GM12878 (cell line): ENCODE measurements at regions of chr11 and their contacts with region 1.

Region 1: DNA sequence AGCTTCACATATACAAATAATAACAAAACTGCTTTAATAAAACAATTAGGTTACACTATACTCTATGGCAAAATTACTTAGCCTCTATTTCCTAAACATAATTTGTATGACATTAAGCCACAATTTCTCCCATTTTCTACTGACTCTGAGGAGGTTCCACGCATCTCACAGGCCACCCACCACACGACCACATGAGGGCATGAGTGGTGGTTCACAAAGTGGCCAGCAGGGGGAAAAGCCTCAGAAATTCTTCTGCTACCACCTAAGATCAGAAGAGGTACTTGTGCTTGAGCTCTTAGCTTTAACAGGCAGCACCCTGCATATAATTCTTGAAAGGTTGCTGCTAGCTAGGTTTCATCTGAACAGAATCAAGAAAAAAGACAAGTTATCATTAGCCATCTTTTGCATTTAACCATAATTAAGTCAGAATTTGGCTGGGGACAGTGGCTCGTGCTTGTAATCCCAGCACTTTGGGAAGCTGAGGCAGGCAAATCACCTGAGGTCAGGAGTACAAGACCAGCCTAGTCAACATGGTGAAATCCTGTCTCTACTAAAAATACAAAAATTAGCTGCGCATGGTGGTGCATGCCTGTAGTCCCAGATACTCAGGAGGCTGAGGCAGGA is 7.7 kb downstream of the LPXN start:
- DNase-seq: no peak
- ATAC-seq: peak; percentile 89
- H3K4me3 ChIP-seq: 0 out of 2 replicates have a peak overlapping the region, but pooled peaks have one; percentile 16
- H3K27ac ChIP-seq: no peak overlapping the region
- H3K4me1 ChIP-seq: peaks cover 10% of the 10 kb centered on the region
- H3K27me3 ChIP-seq: no peaks in the 10 kb centered on the region
- CTCF ChIP-seq: peak; percentile 80 to 89 (median 85)
- EP300 ChIP-seq: no peak
- POLR2A ChIP-seq: no peak
- RAD21 ChIP-seq: peak; percentile 59

Region 2: GRCh38 chr11:57834852-57835251 is 733.1 kb before region 1 on chr11:
- CTCF ChIA-PET with region 1: no interaction called
- POLR2A ChIA-PET with region 1: no interaction called
- RAD21 ChIA-PET with region 1: no interaction called
- SMC1A ChIA-PET with region 1: no interaction called
- in situ Hi-C with region 1: no loop called
- intact Hi-C with region 1: no loop called
- DNase-seq: no peak
- ATAC-seq: no peak
- H3K4me3 ChIP-seq: no peak overlapping the region
- H3K27ac ChIP-seq: no peak overlapping the region
- H3K4me1 ChIP-seq: no peaks in the 10 kb centered on the region
- H3K27me3 ChIP-seq: no peaks in the 10 kb centered on the region; a peak in 1 of 4 replicates
- CTCF ChIP-seq: no peak
- EP300 ChIP-seq: no peak
- POLR2A ChIP-seq: no peak
- RAD21 ChIP-seq: no peak

Region 3: GRCh38 chr11:58471892-58472291 is 96.1 kb before region 1 on chr11:
- CTCF ChIA-PET with region 1: no interaction called
- POLR2A ChIA-PET with region 1: no interaction called
- RAD21 ChIA-PET with region 1: no interaction called
- SMC1A ChIA-PET with region 1: no interaction called
- in situ Hi-C with region 1: no loop called
- intact Hi-C with region 1: no loop called
- DNase-seq: no peak
- ATAC-seq: no peak
- H3K4me3 ChIP-seq: no peak overlapping the region
- H3K27ac ChIP-seq: no peak overlapping the region
- H3K4me1 ChIP-seq: no peaks in the 10 kb centered on the region
- H3K27me3 ChIP-seq: no peaks in the 10 kb centered on the region
- CTCF ChIP-seq: no peak
- EP300 ChIP-seq: no peak
- POLR2A ChIP-seq: no peak
- RAD21 ChIP-seq: no peak

Region 4: DNA sequence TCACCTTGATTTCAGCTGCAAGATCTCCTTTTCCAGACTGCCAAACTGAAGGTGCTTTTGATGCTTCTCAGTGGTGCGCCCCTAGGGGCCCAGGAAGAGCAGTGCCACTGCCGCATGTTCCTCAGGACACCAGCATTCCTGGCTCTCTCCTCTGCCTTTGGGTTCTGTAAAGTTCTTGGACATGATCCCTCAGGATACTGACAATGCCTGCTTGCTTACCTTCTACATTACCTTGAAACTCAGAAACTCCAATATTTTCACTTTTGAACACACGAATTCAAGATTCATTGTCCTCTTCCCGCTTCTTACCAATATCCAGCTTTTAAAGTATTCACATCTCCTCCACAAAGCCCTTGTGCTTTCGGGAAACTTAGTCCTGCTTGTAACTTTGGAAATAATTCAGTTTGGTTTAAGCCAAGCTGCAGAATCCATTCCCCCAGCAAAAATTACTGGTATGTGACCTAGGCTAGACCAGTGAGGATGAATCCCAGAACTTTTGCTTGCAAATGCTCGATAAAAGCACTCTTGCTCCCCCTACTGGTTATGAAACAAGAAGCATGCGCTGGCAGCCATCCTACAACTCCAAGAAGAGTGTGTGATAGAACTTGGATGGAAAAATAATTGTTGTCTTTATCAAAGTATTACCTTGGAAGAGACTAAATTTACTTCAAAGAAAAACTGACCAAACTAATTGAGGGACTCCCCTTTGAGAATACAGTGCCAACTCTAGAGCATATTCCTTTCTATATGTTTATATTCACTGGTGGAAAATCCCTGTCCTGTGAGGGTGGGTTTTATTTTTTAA is 43.6 kb before region 1 on chr11:
- CTCF ChIA-PET with region 1: interaction called, 25 read pairs
- POLR2A ChIA-PET with region 1: no interaction called
- RAD21 ChIA-PET with region 1: interaction called, 23 read pairs
- SMC1A ChIA-PET with region 1: interaction called, 11 read pairs
- in situ Hi-C with region 1: no loop called
- intact Hi-C with region 1: loop called (anchors 1 kb)
- DNase-seq: peak; percentile 39
- ATAC-seq: peak; percentile 68
- H3K4me3 ChIP-seq: peak overlapping the region; percentile 49; the same call in 1 of the 2 replicates
- H3K27ac ChIP-seq: peak overlapping the region; percentile 75
- H3K4me1 ChIP-seq: peaks cover 30% of the 10 kb centered on the region
- H3K27me3 ChIP-seq: no peaks in the 10 kb centered on the region
- CTCF ChIP-seq: peak; percentile 70 to 77 (median 72)
- EP300 ChIP-seq: no peak
- POLR2A ChIP-seq: peak; percentile 21; the same call in 1 of the 2 replicates
- RAD21 ChIP-seq: peak; percentile 72

Region 5: GRCh38 chr11:58586998-58587397 is 19.0 kb after region 1 on chr11:
- CTCF ChIA-PET with region 1: interaction called, 39 read pairs
- POLR2A ChIA-PET with region 1: interaction called, 3 read pairs
- RAD21 ChIA-PET with region 1: interaction called, 11 read pairs
- SMC1A ChIA-PET with region 1: interaction called, 10 read pairs
- in situ Hi-C with region 1: no loop called
- intact Hi-C with region 1: no loop called
- DNase-seq: no peak
- ATAC-seq: peak; percentile 6
- H3K4me3 ChIP-seq: peak overlapping the region; percentile 2; the same call in 1 of the 2 replicates
- H3K27ac ChIP-seq: no peak overlapping the region
- H3K4me1 ChIP-seq: peaks cover 12% of the 10 kb centered on the region; the same call in 1 of the 2 replicates
- H3K27me3 ChIP-seq: no peaks in the 10 kb centered on the region
- CTCF ChIP-seq: no peak
- EP300 ChIP-seq: no peak
- POLR2A ChIP-seq: no peak
- RAD21 ChIP-seq: no peak

Region 6: DNA sequence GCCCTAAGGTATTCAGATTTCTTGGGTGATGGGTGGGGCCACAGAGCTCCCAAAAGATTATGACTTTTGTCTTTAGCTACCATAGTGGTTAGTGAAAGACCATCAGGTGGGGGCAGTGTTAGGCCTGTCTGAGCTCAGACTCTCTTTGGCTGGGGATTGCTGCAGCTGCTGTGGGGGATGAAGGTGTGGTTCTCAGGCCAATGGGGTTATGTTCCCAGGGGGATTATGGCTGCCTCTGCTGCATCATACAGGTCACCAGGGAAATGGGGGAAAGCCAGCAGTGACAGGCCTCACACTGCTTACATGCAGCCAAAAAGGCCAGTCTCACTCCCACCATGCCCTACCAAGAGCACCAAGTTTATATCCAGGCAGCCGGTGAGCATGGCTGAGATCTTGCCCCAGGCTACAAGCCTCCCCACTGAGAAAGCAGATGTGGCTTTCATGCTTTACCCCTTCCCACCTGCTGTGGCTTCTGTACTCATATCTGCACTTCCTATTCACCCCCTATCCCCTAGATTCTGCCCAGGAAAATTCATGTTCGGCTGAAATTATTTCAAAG is 79.2 kb after region 1 on chr11:
- CTCF ChIA-PET with region 1: interaction called, 13 read pairs
- POLR2A ChIA-PET with region 1: no interaction called
- RAD21 ChIA-PET with region 1: interaction called, 12 read pairs
- SMC1A ChIA-PET with region 1: interaction called, 8 read pairs
- in situ Hi-C with region 1: no loop called
- intact Hi-C with region 1: no loop called
- DNase-seq: peak; percentile 48
- ATAC-seq: peak; percentile 93
- H3K4me3 ChIP-seq: no peak overlapping the region
- H3K27ac ChIP-seq: peak overlapping the region; percentile 40; the same call in 1 of the 2 replicates
- H3K4me1 ChIP-seq: peaks cover 10% of the 10 kb centered on the region
- H3K27me3 ChIP-seq: no peaks in the 10 kb centered on the region
- CTCF ChIP-seq: peak in 2 of 3 experiments; percentile 21 to 40; a peak in 3 of 6 replicates
- EP300 ChIP-seq: peak; percentile 66 to 72; a peak in 2 of 4 replicates
- POLR2A ChIP-seq: no peak
- RAD21 ChIP-seq: peak; percentile 57; the same call in 1 of the 2 replicates

Region 7: GRCh38 chr11:58788355-58789023 is 220.5 kb after region 1 on chr11:
- CTCF ChIA-PET with region 1: interaction called, 19 read pairs
- POLR2A ChIA-PET with region 1: no interaction called
- RAD21 ChIA-PET with region 1: interaction called, 3 read pairs
- SMC1A ChIA-PET with region 1: interaction called, 13 read pairs
- in situ Hi-C with region 1: loop called (anchors 10 kb)
- intact Hi-C with region 1: no loop called
- DNase-seq: peak; percentile 7
- ATAC-seq: peak; percentile 98
- H3K4me3 ChIP-seq: no peak overlapping the region
- H3K27ac ChIP-seq: no peak overlapping the region
- H3K4me1 ChIP-seq: no peaks in the 10 kb centered on the region
- H3K27me3 ChIP-seq: no peaks in the 10 kb centered on the region; a peak in 1 of 4 replicates
- CTCF ChIP-seq: peak; percentile 88 to 94 (median 88); a peak in 5 of 6 replicates
- EP300 ChIP-seq: no peak
- POLR2A ChIP-seq: no peak
- RAD21 ChIP-seq: peak; percentile 94